ENCODE measurements at regions of chr10 and their contacts with region 1.

Region 1: GRCh38 chr10:101797403-101798059 is 14.3 kb upstream of the NPM3 start:
- DNase-seq: no peak
- ATAC-seq: no peak
- H3K4me3 ChIP-seq: no peak overlapping the region
- H3K4me3 Mint-ChIP-seq: no peak overlapping the region
- H3K27ac ChIP-seq: no peak overlapping the region
- H3K27ac Mint-ChIP-seq: peak overlapping the region; percentile 11
- H3K4me1 ChIP-seq: no peaks in the 10 kb centered on the region
- H3K4me1 Mint-ChIP-seq: peaks cover 38% of the 10 kb centered on the region
- H3K27me3 ChIP-seq: no peaks in the 10 kb centered on the region
- H3K27me3 Mint-ChIP-seq: no peaks in the 10 kb centered on the region
- CTCF ChIP-seq: no peak

Region 2: DNA sequence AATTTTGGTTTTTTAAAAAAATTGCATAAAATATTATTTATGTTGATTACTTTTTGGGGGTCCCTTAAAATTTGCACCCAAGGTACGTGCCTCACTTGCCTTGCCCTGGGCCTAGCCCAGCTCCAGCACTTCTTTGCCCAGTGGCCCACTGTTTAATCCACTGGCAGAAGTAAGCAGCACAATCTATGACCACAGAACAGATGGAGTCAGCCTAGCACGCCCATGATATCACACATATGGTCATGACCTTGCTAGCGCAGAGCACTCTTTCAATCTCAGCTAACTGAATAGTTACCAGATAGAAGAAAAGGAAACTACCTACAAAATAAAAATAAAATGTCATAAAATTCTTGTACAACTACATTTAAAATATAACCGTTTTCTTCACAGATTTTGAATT is 15.1 kb after region 1 on chr10:
- CTCF ChIA-PET with region 1: interaction called, 3 read pairs
- POLR2A ChIA-PET with region 1: interaction called, 3 read pairs
- intact Hi-C with region 1: loop called (anchors 2 kb)
- DNase-seq: no peak
- ATAC-seq: no peak
- H3K4me3 ChIP-seq: no peak overlapping the region
- H3K4me3 Mint-ChIP-seq: peak overlapping the region; percentile 32
- H3K27ac ChIP-seq: no peak overlapping the region
- H3K27ac Mint-ChIP-seq: peak overlapping the region; percentile 74
- H3K4me1 ChIP-seq: peaks cover 33% of the 10 kb centered on the region
- H3K4me1 Mint-ChIP-seq: peaks cover 63% of the 10 kb centered on the region
- H3K27me3 ChIP-seq: no peaks in the 10 kb centered on the region
- H3K27me3 Mint-ChIP-seq: no peaks in the 10 kb centered on the region
- CTCF ChIP-seq: no peak

Measured in CD8-positive, alpha-beta T cell (primary cell).